CD8-positive, alpha-beta memory T cell (primary cell): ENCODE measurements at regions of chr13 and their contacts with region 1.

Region 1: GRCh38 chr13:48233046-48233907 is at the start of gene ITM2B:
- DNase-seq: peak; percentile 61 to 79 (median 72)
- H3K4me3 ChIP-seq: peak within 1 kb of the TSS; percentile 99
- H3K4me3 Mint-ChIP-seq: peak within 1 kb of the TSS; percentile 95 to 100 (median 98)
- H3K27ac ChIP-seq: peak within 1 kb of the TSS; percentile 92
- H3K27ac Mint-ChIP-seq: peak within 1 kb of the TSS; percentile 92 to 99 (median 99)
- H3K4me1 ChIP-seq: peaks cover 44% of the 10 kb centered on the region
- H3K4me1 Mint-ChIP-seq: peaks cover 47 to 62% (median 58%) of the 10 kb centered on the region in 3 donors
- H3K27me3 ChIP-seq: no peaks in the 10 kb centered on the region
- H3K27me3 Mint-ChIP-seq: peaks cover 0 to 2% of the 10 kb centered on the region in 2 donors
- total RNA-seq, gene ITM2B: 122 to 127 TPM

Region 2: DNA sequence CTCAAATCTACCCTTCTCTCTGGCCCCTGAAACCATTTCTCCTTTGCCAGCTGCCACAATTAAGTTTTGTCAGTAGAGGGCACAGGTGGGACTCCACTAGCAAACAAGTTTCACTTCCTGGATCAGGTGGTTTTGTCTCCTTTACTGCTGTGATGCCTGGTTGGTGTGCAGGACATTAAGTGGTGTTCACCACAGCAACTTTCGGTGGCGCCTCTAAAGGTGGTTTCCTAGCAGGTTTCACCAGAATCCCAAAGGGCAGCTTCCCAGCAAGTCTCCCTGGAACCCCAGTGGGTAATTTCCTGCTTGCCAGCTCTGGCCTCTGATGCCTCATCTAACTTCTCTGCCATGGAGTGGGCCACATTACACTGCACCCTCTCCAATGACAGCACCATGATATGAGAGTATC is 155.0 kb before region 1 on chr13:
- CTCF ChIA-PET with region 1: no interaction called
- POLR2A ChIA-PET with region 1: no interaction called
- DNase-seq: no peak
- H3K4me3 ChIP-seq: no peak overlapping the region
- H3K4me3 Mint-ChIP-seq: no peak overlapping the region
- H3K27ac ChIP-seq: no peak overlapping the region
- H3K27ac Mint-ChIP-seq: no peak overlapping the region
- H3K4me1 ChIP-seq: no peaks in the 10 kb centered on the region
- H3K4me1 Mint-ChIP-seq: peaks cover 0 to 5% (median 2%) of the 10 kb centered on the region in 3 donors
- H3K27me3 ChIP-seq: no peaks in the 10 kb centered on the region
- H3K27me3 Mint-ChIP-seq: no peaks in the 10 kb centered on the region

Region 3: GRCh38 chr13:48094781-48095502 is 138.3 kb before region 1 on chr13 and contains the start of gene MED4:
- CTCF ChIA-PET with region 1: interaction called, 11 read pairs
- POLR2A ChIA-PET with region 1: interaction called, 10 read pairs
- DNase-seq: peak; percentile 95 to 98 (median 96)
- H3K4me3 ChIP-seq: peak within 1 kb of the TSS; percentile 85
- H3K4me3 Mint-ChIP-seq: peak within 1 kb of the TSS; percentile 91 to 98 (median 96)
- H3K27ac ChIP-seq: peak within 1 kb of the TSS; percentile 87
- H3K27ac Mint-ChIP-seq: peak within 1 kb of the TSS; percentile 86 to 99 (median 96)
- H3K4me1 ChIP-seq: peaks cover 27% of the 10 kb centered on the region
- H3K4me1 Mint-ChIP-seq: peaks cover 41 to 56% (median 51%) of the 10 kb centered on the region in 3 donors
- H3K27me3 ChIP-seq: no peaks in the 10 kb centered on the region
- H3K27me3 Mint-ChIP-seq: peaks cover 2 to 3% of the 10 kb centered on the region in 2 donors
- total RNA-seq, gene MED4: 61.1 to 68.1 TPM

Region 4: DNA sequence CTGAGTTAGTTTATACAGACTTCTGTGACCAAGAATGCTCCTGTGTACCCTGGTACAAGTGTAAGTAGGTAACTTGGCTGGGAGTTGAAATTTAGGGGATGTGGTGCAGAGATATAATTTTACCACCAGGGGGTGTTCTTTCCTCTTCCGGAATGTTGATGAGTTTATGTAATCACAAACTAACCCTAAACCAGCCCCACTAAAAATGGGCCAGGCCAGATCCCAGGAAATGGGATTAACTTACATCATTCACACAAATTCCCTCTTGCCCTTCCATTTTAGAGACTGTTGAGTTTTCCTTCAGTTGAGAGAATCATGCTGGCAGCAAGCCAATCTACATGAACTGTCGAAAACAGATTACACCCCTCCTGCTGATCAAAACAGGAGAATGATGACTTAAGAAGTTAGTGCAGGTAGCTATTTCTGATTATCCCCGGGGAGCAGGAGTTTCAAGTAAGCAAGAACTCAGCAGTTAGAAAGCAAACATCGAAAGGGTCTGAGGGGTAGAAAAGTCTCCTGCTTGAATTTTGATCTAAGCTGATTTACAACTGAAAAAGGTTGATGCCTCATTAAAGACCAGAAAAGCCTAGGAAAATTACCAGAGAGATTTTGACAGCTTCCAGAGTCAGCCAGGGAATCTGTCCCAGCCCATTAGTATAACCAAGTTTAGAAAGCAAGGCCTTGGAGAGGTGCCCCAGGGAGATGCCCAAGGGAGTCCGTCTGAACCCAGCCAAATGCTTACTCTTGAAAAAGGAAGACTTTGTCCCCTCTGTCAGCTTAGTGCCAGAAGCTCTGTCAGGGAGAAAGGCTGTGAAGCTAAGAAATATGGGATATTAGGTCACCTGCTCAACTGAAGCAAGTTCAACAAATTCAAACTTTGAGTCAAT is 106.1 kb before region 1 on chr13:
- CTCF ChIA-PET with region 1: interaction called, 46 read pairs
- POLR2A ChIA-PET with region 1: interaction called, 22 read pairs
- DNase-seq: peak in 4 of 5 donors; percentile 5 to 79 (median 66)
- H3K4me3 ChIP-seq: peak overlapping the region; percentile 16
- H3K4me3 Mint-ChIP-seq: peak overlapping the region in 6 of 7 donors; percentile 10 to 50 (median 37)
- H3K27ac ChIP-seq: no peak overlapping the region
- H3K27ac Mint-ChIP-seq: peak overlapping the region; percentile 61 to 88 (median 79)
- H3K4me1 ChIP-seq: peaks cover 12% of the 10 kb centered on the region
- H3K4me1 Mint-ChIP-seq: peaks cover 12 to 28% (median 22%) of the 10 kb centered on the region in 3 donors
- H3K27me3 ChIP-seq: no peaks in the 10 kb centered on the region
- H3K27me3 Mint-ChIP-seq: peaks cover 0 to 2% of the 10 kb centered on the region in 2 donors

Region 5: GRCh38 chr13:48155848-48156247 is 77.4 kb before region 1 on chr13:
- CTCF ChIA-PET with region 1: interaction called, 19 read pairs
- POLR2A ChIA-PET with region 1: interaction called, 34 read pairs
- DNase-seq: peak; percentile 2 to 76 (median 65)
- H3K4me3 ChIP-seq: peak overlapping the region; percentile 19
- H3K4me3 Mint-ChIP-seq: peak overlapping the region; percentile 25 to 89 (median 77)
- H3K27ac ChIP-seq: peak overlapping the region; percentile 60
- H3K27ac Mint-ChIP-seq: peak overlapping the region; percentile 78 to 98 (median 88)
- H3K4me1 ChIP-seq: peaks cover 72% of the 10 kb centered on the region
- H3K4me1 Mint-ChIP-seq: peaks cover 66 to 87% (median 84%) of the 10 kb centered on the region in 3 donors
- H3K27me3 ChIP-seq: no peaks in the 10 kb centered on the region
- H3K27me3 Mint-ChIP-seq: no peaks in the 10 kb centered on the region

Region 6: GRCh38 chr13:48184260-48184659 is 49.0 kb before region 1 on chr13:
- CTCF ChIA-PET with region 1: interaction called, 15 read pairs
- POLR2A ChIA-PET with region 1: interaction called, 28 read pairs
- DNase-seq: no peak
- H3K4me3 ChIP-seq: peak overlapping the region; percentile 9
- H3K4me3 Mint-ChIP-seq: peak overlapping the region in 4 of 7 donors; percentile 8 to 58 (median 46)
- H3K27ac ChIP-seq: no peak overlapping the region
- H3K27ac Mint-ChIP-seq: peak overlapping the region; percentile 64 to 87 (median 79)
- H3K4me1 ChIP-seq: peaks cover 62% of the 10 kb centered on the region
- H3K4me1 Mint-ChIP-seq: peaks cover 57 to 69% (median 69%) of the 10 kb centered on the region in 3 donors
- H3K27me3 ChIP-seq: no peaks in the 10 kb centered on the region
- H3K27me3 Mint-ChIP-seq: no peaks in the 10 kb centered on the region

Region 7: GRCh38 chr13:48220981-48221685 is 12.1 kb before region 1 on chr13:
- CTCF ChIA-PET with region 1: interaction called, 17 read pairs
- POLR2A ChIA-PET with region 1: interaction called, 44 read pairs
- DNase-seq: peak in 2 of 5 donors; percentile 38 to 56
- H3K4me3 ChIP-seq: peak overlapping the region; percentile 49
- H3K4me3 Mint-ChIP-seq: peak overlapping the region; percentile 59 to 84 (median 78)
- H3K27ac ChIP-seq: peak overlapping the region; percentile 26
- H3K27ac Mint-ChIP-seq: peak overlapping the region; percentile 88 to 99 (median 94)
- H3K4me1 ChIP-seq: peaks cover 54% of the 10 kb centered on the region
- H3K4me1 Mint-ChIP-seq: peaks cover 46 to 64% (median 63%) of the 10 kb centered on the region in 3 donors
- H3K27me3 ChIP-seq: no peaks in the 10 kb centered on the region
- H3K27me3 Mint-ChIP-seq: no peaks in the 10 kb centered on the region